Right ventricle myocardium superior (tissue), 1 donor: ENCODE measurements at regions of chr15 and their contacts with region 1.

Region 1: DNA sequence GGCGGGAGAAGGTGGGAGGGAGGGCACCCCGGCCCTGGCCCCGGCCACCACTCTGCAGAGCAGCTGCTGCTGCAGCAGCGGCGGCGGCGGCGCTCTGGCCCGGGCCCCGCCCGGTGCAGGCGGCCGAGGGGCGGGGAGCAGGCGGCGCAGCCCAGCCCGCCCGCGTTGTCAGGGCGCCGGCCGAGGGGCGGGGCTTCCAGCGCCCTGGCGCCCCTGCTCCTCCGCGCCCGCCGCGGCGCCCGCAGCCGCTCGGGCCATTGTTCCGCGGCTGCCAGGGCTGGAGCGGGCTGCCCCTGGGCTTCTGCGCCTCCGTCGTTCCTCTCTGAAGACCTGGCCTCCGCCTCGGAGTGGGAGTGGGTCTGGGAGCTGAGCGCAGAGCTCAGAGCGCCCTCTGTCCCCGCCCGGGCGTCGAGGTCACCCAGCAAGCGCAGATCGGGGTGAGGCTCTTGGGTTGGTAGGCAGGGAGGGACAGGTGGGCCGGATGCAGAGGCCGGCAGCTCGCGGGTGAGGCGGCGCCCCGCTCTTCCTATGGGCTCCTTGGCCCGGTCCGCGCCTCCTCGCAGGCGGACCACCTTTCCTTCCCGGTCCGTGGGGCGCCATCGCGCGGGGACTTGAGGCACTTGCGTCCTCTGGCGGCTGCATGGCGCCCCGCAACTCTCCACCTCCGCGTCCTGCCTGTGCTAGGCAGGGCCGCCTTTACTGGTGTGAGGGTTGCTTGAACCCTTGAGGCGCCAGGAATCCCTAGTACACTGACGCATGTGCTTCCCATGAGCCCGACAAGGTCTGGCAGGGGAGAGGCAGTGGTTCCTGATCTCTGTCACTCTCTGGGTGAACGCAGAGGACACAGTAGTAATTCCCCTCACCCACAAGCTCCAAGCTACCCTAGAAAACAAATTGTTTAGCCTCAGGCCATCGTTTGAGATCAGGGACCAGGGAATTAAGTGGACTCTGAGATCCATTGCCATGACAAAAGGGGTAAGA is at the start of gene LPCAT4:
- DNase-seq: peak; percentile 94
- ATAC-seq: peak; percentile 96
- total RNA-seq, gene LPCAT4: 82.4 TPM

Region 2: GRCh38 chr15:34206011-34206410 is 161.4 kb before region 1 on chr15:
- intact Hi-C with region 1: no loop called
- DNase-seq: no peak
- ATAC-seq: no peak

Region 3: GRCh38 chr15:34241372-34242330 is 125.7 kb before region 1 on chr15:
- intact Hi-C with region 1: loop called (anchors 10 kb)
- DNase-seq: no peak
- ATAC-seq: peak; percentile 64

Region 4: GRCh38 chr15:34314491-34315490 is 52.6 kb before region 1 on chr15:
- intact Hi-C with region 1: no loop called
- DNase-seq: no peak
- ATAC-seq: no peak

Region 5: GRCh38 chr15:34342737-34343575 is 24.4 kb before region 1 on chr15 and contains the starts of genes NOP10 and NUTM1:
- intact Hi-C with region 1: loop called (anchors 1 kb)
- DNase-seq: peak; percentile 93
- ATAC-seq: peak; percentile 97
- total RNA-seq, gene NOP10: 136 TPM
- total RNA-seq, gene NUTM1: not detected